ENCODE measurements at regions of chr5 and their contacts with region 1.

Region 1: GRCh38 chr5:23139338-23140171 is 286.4 kb upstream of the CDH12 start:
- DNase-seq: peak; percentile 0
- ATAC-seq: no peak
- H3K4me3 ChIP-seq: no peak overlapping the region
- H3K27ac ChIP-seq: no peak overlapping the region
- H3K4me1 ChIP-seq: no peaks in the 10 kb centered on the region
- H3K27me3 ChIP-seq: no peaks in the 10 kb centered on the region
- CTCF ChIP-seq: peak; percentile 34
- POLR2A ChIP-seq: no peak
- RAD21 ChIP-seq: peak; percentile 20; the same call in 1 of the 2 replicates

Region 2: GRCh38 chr5:21810737-21811316 is 1328.7 kb before region 1 on chr5:
- CTCF ChIA-PET with region 1: no interaction called
- POLR2A ChIA-PET with region 1: no interaction called
- dilution Hi-C with region 1: no loop called
- in situ Hi-C with region 1: no loop called
- intact Hi-C with region 1: loop called (anchors 5 kb)
- DNase-seq: peak; percentile 39
- ATAC-seq: peak; percentile 47; the same call in 1 of the 2 replicates
- H3K4me3 ChIP-seq: no peak overlapping the region
- H3K27ac ChIP-seq: no peak overlapping the region
- H3K4me1 ChIP-seq: peaks cover 2% of the 10 kb centered on the region
- H3K27me3 ChIP-seq: no peaks in the 10 kb centered on the region
- CTCF ChIP-seq: peak; percentile 57
- POLR2A ChIP-seq: no peak
- RAD21 ChIP-seq: peak; percentile 47

Region 3: DNA sequence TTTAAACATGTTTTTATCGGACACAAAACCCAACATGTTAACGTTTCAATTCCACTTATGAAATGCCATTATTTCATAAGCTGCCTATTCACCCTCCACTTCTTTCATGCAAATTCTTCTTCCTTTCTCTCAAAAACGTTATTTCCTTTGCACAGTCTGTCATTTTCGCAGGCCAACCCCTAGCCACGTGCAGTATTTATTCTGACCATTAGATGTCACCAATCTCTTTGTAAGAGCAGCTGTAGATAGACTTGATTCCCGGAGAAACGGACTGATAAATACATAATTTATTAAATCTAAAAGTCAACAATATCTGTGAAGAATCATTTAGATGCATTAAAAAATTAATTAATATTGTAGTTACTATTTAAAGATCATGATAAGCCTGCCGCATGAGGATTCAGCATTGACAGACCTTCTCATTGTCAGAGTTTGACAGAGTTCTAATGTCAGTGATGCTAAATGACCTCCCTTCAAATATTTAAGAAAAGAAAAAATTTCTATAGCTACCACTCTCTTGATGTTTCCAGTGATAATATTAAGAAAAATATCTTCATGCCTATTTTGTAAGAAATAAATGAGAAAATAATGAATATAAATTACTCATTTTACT is 1220.0 kb before region 1 on chr5:
- CTCF ChIA-PET with region 1: no interaction called
- POLR2A ChIA-PET with region 1: no interaction called
- dilution Hi-C with region 1: no loop called
- in situ Hi-C with region 1: no loop called
- intact Hi-C with region 1: loop called (anchors 5 kb)
- DNase-seq: peak; percentile 45
- ATAC-seq: peak; percentile 72
- H3K4me3 ChIP-seq: no peak overlapping the region
- H3K27ac ChIP-seq: no peak overlapping the region
- H3K4me1 ChIP-seq: no peaks in the 10 kb centered on the region
- H3K27me3 ChIP-seq: no peaks in the 10 kb centered on the region
- CTCF ChIP-seq: peak; percentile 67
- POLR2A ChIP-seq: no peak
- RAD21 ChIP-seq: peak; percentile 60

Region 4: GRCh38 chr5:23289162-23289561 is 149.6 kb after region 1 on chr5:
- CTCF ChIA-PET with region 1: no interaction called
- POLR2A ChIA-PET with region 1: no interaction called
- dilution Hi-C with region 1: no loop called
- in situ Hi-C with region 1: no loop called
- intact Hi-C with region 1: no loop called
- DNase-seq: no peak
- ATAC-seq: no peak
- H3K4me3 ChIP-seq: no peak overlapping the region
- H3K27ac ChIP-seq: no peak overlapping the region
- H3K4me1 ChIP-seq: no peaks in the 10 kb centered on the region
- H3K27me3 ChIP-seq: no peaks in the 10 kb centered on the region
- CTCF ChIP-seq: no peak
- POLR2A ChIP-seq: no peak
- RAD21 ChIP-seq: no peak